HepG2 (cell line): ENCODE measurements at regions of chr14 and their contacts with region 1.

Region 1: DNA sequence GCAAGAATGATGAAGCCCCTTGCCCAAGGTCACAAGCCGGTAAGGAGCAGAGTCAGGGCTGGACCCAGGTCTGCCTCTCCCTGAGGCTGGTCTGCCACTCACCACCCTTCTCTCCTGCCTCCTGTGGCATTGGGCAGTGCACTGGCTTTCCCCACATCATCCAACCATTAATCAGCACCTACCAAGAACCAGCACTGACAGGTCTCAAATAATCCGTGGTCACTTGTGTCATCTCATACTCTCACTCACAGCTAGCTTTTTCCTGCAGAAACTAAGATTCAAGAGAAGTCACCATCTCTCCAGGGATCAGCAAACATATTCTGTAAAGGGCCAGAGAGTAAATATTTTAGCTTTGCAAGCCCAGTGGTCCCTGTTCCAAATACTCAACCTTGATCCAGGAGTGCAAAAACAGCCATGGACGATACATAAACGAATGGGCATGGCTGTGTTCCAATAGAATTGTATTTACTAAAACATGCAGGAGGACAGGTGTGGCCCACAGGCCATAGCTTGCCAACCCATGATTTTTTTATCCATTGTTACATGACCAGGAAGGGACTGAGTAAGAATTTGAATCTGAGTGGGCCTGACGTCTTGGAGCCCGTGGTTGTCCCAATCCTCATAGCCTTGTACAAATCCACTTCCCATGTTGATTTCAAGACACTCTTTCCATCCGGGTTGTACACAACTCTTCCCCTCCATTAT is 374.2 kb downstream of the BCL11B start:
- DNase-seq: no peak
- ATAC-seq: no peak
- H3K4me3 ChIP-seq: no peak overlapping the region
- H3K27ac ChIP-seq: no peak overlapping the region
- H3K4me1 ChIP-seq: no peaks in the 10 kb centered on the region
- H3K27me3 ChIP-seq: peaks cover 0 to 10% of the 10 kb centered on the region in 2 experiments; a peak in 2 of 5 replicates
- CTCF ChIP-seq: no peak
- EP300 ChIP-seq: no peak
- POLR2A ChIP-seq: no peak
- RAD21 ChIP-seq: no peak

Region 2: GRCh38 chr14:98682033-98682432 is 215.7 kb before region 1 on chr14:
- CTCF ChIA-PET with region 1: no interaction called
- POLR2A ChIA-PET with region 1: no interaction called
- in situ Hi-C with region 1: no loop called
- intact Hi-C with region 1: no loop called
- DNase-seq: no peak
- ATAC-seq: no peak
- H3K4me3 ChIP-seq: no peak overlapping the region
- H3K27ac ChIP-seq: no peak overlapping the region
- H3K4me1 ChIP-seq: no peaks in the 10 kb centered on the region
- H3K27me3 ChIP-seq: no peaks in the 10 kb centered on the region
- CTCF ChIP-seq: no peak
- EP300 ChIP-seq: no peak
- POLR2A ChIP-seq: no peak
- RAD21 ChIP-seq: no peak

Region 3: GRCh38 chr14:99480917-99481744 is 583.4 kb after region 1 on chr14 and contains the start of gene CCNK:
- CTCF ChIA-PET with region 1: no interaction called
- POLR2A ChIA-PET with region 1: no interaction called
- in situ Hi-C with region 1: no loop called
- intact Hi-C with region 1: loop called (anchors 5 kb)
- DNase-seq: peak; percentile 98
- ATAC-seq: peak; percentile 91
- H3K4me3 ChIP-seq: peak within 1 kb of the TSS; percentile 92 to 97 (median 93)
- H3K27ac ChIP-seq: peak within 1 kb of the TSS; percentile 90
- H3K4me1 ChIP-seq: peaks cover 51% of the 10 kb centered on the region
- H3K27me3 ChIP-seq: no peaks in the 10 kb centered on the region; a peak in 1 of 5 replicates
- CTCF ChIP-seq: no peak; the same call in 1 of the 2 replicates
- EP300 ChIP-seq: no peak
- POLR2A ChIP-seq: peak; percentile 90 to 91
- RAD21 ChIP-seq: no peak
- total RNA-seq, gene CCNK: 9.7 and 16.5 TPM in 2 replicates